ENCODE measurements at regions of chr15 and their contacts with region 1.

Region 1: DNA sequence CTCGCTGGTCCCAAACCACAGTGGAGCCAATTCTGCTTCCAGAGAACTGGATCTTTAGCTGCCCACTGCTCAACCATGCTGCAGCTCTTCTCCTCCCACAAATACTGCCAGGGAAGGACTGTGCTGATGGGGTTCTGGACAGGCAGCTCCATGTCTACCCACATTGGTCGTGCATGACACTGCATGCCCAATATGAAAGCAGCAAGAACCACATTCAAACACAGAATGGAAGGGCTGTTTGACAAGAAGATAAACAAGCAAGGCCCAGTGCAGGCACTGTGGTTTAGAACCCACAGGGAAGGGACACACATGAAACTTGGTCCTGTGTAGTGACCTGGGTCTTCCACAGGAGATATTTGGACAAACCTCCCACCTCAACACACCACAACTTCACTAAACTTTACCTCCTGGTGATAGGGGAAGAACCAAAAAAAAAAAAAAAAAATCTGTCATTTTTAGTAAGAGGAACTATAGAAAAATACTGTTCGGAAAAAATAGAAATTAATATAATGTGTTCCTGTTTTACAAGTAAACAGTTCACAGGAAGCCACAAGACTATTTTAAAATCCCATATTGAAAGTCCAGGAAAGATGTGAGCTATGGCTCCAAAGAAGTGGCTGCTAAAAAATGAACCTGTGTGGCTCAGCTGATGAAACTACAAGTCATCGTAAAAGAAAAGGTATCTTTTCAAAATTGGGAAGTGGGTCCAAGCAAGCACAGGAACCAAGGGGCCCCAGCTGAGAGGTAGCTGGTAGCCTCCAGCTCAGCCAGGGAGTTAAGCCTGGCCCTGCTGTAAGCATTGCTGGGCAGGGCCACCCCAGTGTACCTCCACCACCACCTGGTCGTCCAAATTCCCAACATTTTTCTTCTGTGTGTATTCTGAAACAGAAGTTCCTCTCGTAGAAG is 77.7 kb upstream of the ACAN start:
- DNase-seq: no peak
- ATAC-seq: no peak

Region 2: GRCh38 chr15:88647351-88648105 is 78.0 kb before region 1 on chr15:
- intact Hi-C with region 1: loop called (anchors 2 kb)
- DNase-seq: peak; percentile 54
- ATAC-seq: no peak

Region 3: DNA sequence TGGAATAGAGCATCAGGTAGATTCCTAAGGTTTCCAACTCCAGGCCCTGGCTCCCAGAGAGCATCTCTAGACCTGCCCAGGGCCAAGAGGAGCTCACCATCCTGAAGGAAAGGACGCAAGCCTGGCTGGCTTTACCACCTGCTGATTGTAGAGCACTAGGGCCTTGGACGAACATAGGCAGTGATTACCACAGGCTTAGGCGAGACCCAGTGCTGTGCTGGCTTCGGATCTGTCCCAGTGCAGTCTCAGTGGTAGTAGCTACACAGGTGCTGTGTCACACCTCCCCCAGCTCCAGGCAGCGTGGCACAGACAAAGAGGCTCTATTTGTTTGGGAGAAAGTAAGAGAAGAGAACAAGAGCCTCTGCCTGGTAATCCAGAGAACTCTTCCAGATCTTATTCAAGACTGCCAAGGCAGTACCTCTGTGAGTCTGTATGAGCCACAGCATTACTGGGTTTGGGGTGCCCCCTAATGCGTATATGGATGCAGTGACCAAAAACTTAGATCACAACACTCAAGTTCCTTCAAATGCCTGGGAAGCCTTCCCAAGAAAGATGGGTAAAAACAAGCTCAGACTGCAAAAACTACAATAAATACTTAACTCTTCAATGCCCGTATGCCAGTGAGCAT is 61.3 kb before region 1 on chr15:
- intact Hi-C with region 1: no loop called
- DNase-seq: peak; percentile 56
- ATAC-seq: peak; percentile 66

Region 4: DNA sequence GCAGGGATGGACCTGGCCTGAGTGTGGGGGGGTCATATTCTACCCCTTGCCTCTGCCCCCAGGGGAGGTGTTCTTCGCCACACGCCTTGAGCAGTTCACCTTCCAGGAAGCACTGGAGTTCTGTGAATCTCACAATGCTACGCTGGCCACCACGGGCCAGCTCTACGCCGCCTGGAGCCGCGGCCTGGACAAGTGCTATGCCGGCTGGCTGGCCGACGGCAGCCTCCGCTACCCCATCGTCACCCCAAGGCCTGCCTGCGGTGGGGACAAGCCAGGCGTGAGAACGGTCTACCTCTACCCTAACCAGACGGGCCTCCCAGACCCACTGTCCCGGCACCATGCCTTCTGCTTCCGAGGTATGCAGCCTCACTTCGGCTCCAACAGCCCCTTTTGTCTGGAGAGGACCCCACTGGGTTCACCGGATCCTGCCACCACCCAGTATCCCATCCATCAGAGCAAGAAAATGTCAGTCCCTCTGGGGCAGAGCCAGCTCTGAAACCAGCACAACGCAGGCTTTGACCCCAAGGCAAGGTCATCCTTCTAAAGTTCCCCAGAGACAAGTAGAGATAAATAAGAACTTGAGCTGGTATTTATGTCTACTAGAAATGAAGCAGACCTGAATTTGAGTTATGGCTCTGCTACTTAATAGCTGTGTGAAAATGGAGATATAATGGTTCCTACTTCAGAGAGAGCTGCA is 124.0 kb after region 1 on chr15:
- intact Hi-C with region 1: no loop called
- DNase-seq: no peak
- ATAC-seq: no peak

Measured in sciatic nerve (tissue), 2 donors.